Activated T-helper 1 cell treated with anti-CD3 and anti-CD28 coated beads, Interleukin-12 subunit alpha, Interleukin-12 subunit beta, Interleukin-2, Interleukin-4 antibody, amounts not matched to agents 30 ng/mL and 10 ng/mL and 1 ng/mL, durations not matched to agents 14 hours and 24 hours and 36 hours (primary cell): ENCODE measurements at regions of chr10 and their contacts with region 1.

Region 1: GRCh38 chr10:109902934-109903589 is 20.2 kb downstream of the XPNPEP1 start:
- DNase-seq: no peak
- H3K4me3 Mint-ChIP-seq: peak overlapping the region; percentile 61
- H3K27ac Mint-ChIP-seq: peak overlapping the region; percentile 80
- H3K4me1 Mint-ChIP-seq: peaks cover 73% of the 10 kb centered on the region
- H3K27me3 Mint-ChIP-seq: no peaks in the 10 kb centered on the region

Region 2: DNA sequence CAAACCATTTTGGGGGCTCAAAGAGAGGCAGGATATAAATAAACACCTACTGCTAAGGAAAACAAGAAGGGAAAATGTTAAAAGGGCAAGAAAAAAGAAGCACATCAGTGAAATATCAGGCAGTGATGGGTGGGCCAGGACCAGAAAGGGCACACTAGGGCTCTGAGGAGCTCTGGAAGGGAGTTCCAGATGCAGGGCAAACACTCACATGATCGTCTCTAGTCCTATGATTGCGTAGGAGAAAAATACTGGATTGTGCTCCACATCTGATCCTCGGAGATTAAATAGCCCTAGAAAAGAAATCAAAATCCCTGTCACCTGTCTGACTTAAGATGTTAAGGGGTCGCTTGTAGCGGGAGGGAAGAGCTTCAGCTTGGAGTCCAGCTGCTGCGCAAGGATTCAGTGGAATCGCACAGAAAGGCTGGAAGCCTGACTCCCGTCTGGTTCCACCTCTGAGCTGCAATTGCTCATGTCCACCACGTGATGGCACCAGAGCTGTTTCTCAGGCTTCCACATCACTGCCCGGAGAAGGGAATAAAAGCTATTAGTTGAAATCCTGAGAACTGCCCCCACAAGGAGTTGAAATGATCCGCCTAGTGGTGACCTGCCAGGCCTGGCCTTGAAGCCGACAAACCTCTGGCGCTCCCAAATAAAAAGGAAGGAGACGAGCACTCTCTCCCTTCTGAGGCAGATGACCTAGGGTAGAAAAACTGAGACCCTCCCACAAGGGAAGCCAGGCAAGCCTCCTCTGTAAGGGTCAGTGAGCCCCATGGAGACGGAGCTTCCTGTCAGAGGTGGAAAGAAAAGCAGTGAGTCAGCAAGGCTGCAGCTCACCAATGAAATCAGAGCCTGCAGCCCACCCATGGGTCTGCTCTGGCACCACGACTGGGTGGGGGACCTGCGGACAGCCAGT is 18.9 kb before region 1 on chr10:
- intact Hi-C with region 1: no loop called
- DNase-seq: peak; percentile 31
- H3K4me3 Mint-ChIP-seq: no peak overlapping the region
- H3K27ac Mint-ChIP-seq: no peak overlapping the region
- H3K4me1 Mint-ChIP-seq: peaks cover 21% of the 10 kb centered on the region
- H3K27me3 Mint-ChIP-seq: no peaks in the 10 kb centered on the region

Region 3: GRCh38 chr10:109914966-109915365 is 11.9 kb after region 1 on chr10:
- intact Hi-C with region 1: loop called (anchors 1 kb)
- DNase-seq: peak; percentile 25
- H3K4me3 Mint-ChIP-seq: peak overlapping the region; percentile 61
- H3K27ac Mint-ChIP-seq: peak overlapping the region; percentile 77
- H3K4me1 Mint-ChIP-seq: peaks cover 91% of the 10 kb centered on the region
- H3K27me3 Mint-ChIP-seq: no peaks in the 10 kb centered on the region

Region 4: GRCh38 chr10:109922976-109923921 is 20.2 kb after region 1 on chr10 and contains the start of gene XPNPEP1:
- intact Hi-C with region 1: loop called (anchors 2 kb)
- DNase-seq: peak; percentile 81
- H3K4me3 Mint-ChIP-seq: peak within 1 kb of the TSS; percentile 94
- H3K27ac Mint-ChIP-seq: peak within 1 kb of the TSS; percentile 92
- H3K4me1 Mint-ChIP-seq: peaks cover 58% of the 10 kb centered on the region
- H3K27me3 Mint-ChIP-seq: peaks cover 5% of the 10 kb centered on the region
- total RNA-seq, gene XPNPEP1: 85.1 and 93.2 TPM in 2 replicates